Aorta (tissue), 5 donors: ENCODE measurements at regions of chr19 and their contacts with region 1.

Region 1: GRCh38 chr19:40059624-40060023 is 3.6 kb upstream of the ZNF780B start:
- DNase-seq: no peak
- ATAC-seq: no peak
- H3K4me3 ChIP-seq: no peak overlapping the region
- H3K27ac ChIP-seq: no peak overlapping the region
- H3K4me1 ChIP-seq: no peaks in the 10 kb centered on the region
- H3K27me3 ChIP-seq: no peaks in the 10 kb centered on the region

Region 2: GRCh38 chr19:39355253-39355652 is 704.4 kb before region 1 on chr19:
- intact Hi-C with region 1: loop called in 1 of 2 experiments (anchors 5 kb)
- DNase-seq: peak in 1 of 2 donors; percentile 24
- ATAC-seq: no peak
- H3K4me3 ChIP-seq: no peak overlapping the region
- H3K27ac ChIP-seq: no peak overlapping the region
- H3K4me1 ChIP-seq: no peaks in the 10 kb centered on the region
- H3K27me3 ChIP-seq: no peaks in the 10 kb centered on the region

Region 3: DNA sequence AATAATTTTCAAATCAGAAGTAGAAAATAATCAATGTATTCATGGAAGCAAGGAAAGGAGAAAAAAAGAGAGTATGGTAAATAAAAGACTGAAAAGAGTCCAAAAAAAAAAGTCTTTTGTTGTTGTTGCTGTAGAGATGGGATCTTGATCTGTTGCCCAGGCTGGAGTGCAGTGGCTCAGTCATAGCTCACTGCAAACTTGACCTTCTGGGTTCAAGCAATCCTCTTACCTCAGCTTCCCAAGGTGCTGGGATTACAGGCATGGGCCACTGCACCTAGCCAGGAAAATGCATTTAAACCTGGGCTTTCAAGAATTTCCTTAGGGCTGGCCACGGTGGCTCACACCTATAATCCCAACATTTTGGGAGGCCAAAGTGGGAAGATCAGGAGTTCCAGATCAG is 124.6 kb after region 1 on chr19:
- intact Hi-C with region 1: no loop called
- DNase-seq: no peak
- ATAC-seq: no peak
- H3K4me3 ChIP-seq: no peak overlapping the region
- H3K27ac ChIP-seq: no peak overlapping the region
- H3K4me1 ChIP-seq: no peaks in the 10 kb centered on the region
- H3K27me3 ChIP-seq: no peaks in the 10 kb centered on the region

Region 4: GRCh38 chr19:40285353-40286234 is 226.0 kb after region 1 on chr19:
- intact Hi-C with region 1: no loop called
- DNase-seq: peak; percentile 99
- ATAC-seq: peak; percentile 99
- H3K4me3 ChIP-seq: peak overlapping the region; percentile 64 to 97
- H3K27ac ChIP-seq: peak overlapping the region; percentile 79 to 95
- H3K4me1 ChIP-seq: no peaks in the 10 kb centered on the region
- H3K27me3 ChIP-seq: no peaks in the 10 kb centered on the region